CD4-positive, alpha-beta memory T cell (primary cell): ENCODE measurements at regions of chr12 and their contacts with region 1.

Region 1: DNA sequence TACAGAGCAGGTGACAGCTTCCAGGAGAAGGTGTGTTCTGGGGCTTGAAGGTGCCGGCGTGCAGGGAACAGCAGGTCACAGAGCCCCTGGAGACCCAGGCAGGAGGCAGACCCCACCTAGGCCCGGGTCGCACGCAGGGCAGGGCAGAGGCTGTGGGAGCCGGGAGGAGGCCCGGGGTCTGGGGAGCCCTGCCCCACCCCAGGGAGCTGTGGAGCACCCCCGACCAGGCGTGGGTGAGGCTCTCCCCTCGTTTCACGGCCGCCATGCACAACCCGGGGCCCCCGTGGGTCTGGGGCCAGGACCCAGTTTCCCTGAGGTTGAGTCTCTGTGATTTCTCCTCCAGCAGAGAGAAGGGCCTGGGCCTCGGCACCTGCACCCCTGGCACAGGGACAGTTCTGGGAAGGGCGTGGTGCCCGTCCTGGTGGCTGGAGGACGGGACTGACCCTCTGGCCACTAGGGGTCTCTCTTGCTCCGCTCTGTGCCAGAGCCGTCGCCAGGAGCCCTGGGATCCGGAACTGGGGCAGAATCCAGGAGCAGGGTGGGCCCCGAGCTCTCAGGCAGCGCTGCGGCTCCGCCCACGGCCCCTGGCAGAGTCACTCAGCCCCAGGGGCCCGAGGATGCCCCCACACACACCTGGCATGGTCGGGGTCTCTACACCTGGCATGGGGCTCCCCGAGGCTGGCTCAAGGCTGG is 75.2 kb upstream of the FBRSL1 start:
- DNase-seq: peak; percentile 62 to 78 (median 72)
- H3K4me3 ChIP-seq: no peak overlapping the region
- H3K4me3 Mint-ChIP-seq: peak overlapping the region in 1 of 8 donors; percentile 39
- H3K27ac ChIP-seq: no peak overlapping the region
- H3K27ac Mint-ChIP-seq: peak overlapping the region in 2 of 7 donors; percentile 12 to 46
- H3K4me1 ChIP-seq: peaks cover 12% of the 10 kb centered on the region
- H3K4me1 Mint-ChIP-seq: peaks cover 0 to 4% (median under 1%) of the 10 kb centered on the region in 4 donors
- H3K27me3 ChIP-seq: no peaks in the 10 kb centered on the region
- H3K27me3 Mint-ChIP-seq: peaks cover 0 to 1% of the 10 kb centered on the region in 2 donors

Region 2: GRCh38 chr12:132336451-132337413 is 78.0 kb before region 1 on chr12:
- CTCF ChIA-PET with region 1: no interaction called
- POLR2A ChIA-PET with region 1: no interaction called
- intact Hi-C with region 1: no loop called
- DNase-seq: no peak
- H3K4me3 ChIP-seq: no peak overlapping the region
- H3K4me3 Mint-ChIP-seq: no peak overlapping the region
- H3K27ac ChIP-seq: no peak overlapping the region
- H3K27ac Mint-ChIP-seq: no peak overlapping the region
- H3K4me1 ChIP-seq: no peaks in the 10 kb centered on the region
- H3K4me1 Mint-ChIP-seq: no peaks in the 10 kb centered on the region
- H3K27me3 ChIP-seq: no peaks in the 10 kb centered on the region
- H3K27me3 Mint-ChIP-seq: peaks cover 10 to 13% of the 10 kb centered on the region in 2 donors

Region 3: DNA sequence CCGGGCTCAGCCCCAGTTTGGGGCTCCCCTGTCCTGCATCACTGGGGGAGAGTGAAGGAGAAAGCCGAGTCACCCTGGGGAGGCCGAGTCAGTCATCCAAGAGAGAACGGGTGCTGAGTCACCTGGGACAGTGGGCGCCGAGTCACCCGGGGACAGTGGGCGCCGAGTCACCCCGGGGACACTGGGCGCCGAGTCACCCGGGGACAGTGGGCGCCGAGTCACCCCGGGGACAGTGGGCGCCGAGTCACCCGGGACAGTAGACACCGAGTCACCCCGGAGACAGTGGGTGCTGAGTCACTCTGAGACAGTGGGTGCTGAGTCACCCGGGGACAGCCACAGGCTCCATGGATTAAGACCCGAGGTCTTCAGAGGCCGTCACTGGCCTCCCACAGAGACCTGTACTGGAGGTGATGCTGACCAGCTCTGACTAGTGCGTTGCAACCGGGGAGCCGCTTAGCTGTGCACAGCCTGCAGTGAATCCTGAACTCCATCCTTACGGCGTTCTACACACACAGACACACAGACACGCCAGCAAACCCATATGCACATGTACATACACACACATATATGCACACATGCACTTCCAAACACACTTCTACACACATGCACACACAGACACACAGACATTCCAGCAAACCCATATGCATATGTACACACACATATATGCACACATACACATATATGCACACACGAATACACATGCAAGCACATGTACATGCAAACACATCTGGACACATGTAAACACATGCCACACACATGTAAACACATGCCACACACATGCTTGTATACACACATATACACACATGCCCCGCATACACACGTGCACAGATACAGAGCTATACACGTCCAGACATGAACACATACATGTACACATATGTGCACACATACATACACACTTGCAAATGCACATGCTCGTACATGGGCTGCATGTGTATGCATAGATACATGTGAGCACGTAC is 20.5 kb before region 1 on chr12:
- CTCF ChIA-PET with region 1: no interaction called
- POLR2A ChIA-PET with region 1: no interaction called
- intact Hi-C with region 1: no loop called
- DNase-seq: no peak
- H3K4me3 ChIP-seq: no peak overlapping the region
- H3K4me3 Mint-ChIP-seq: no peak overlapping the region
- H3K27ac ChIP-seq: no peak overlapping the region
- H3K27ac Mint-ChIP-seq: no peak overlapping the region
- H3K4me1 ChIP-seq: no peaks in the 10 kb centered on the region
- H3K4me1 Mint-ChIP-seq: no peaks in the 10 kb centered on the region
- H3K27me3 ChIP-seq: no peaks in the 10 kb centered on the region
- H3K27me3 Mint-ChIP-seq: peaks cover 3 to 10% of the 10 kb centered on the region in 2 donors

Region 4: GRCh38 chr12:132429946-132430643 is 15.3 kb after region 1 on chr12:
- CTCF ChIA-PET with region 1: interaction called, 29 read pairs
- POLR2A ChIA-PET with region 1: interaction called, 4 read pairs
- intact Hi-C with region 1: loop called (anchors 1 kb)
- DNase-seq: peak; percentile 61 to 76 (median 72)
- H3K4me3 ChIP-seq: peak overlapping the region in 1 of 2 donors; percentile 23
- H3K4me3 Mint-ChIP-seq: peak overlapping the region; percentile 36 to 86 (median 71)
- H3K27ac ChIP-seq: no peak overlapping the region
- H3K27ac Mint-ChIP-seq: peak overlapping the region in 6 of 7 donors; percentile 32 to 75 (median 66)
- H3K4me1 ChIP-seq: peaks cover 36% of the 10 kb centered on the region
- H3K4me1 Mint-ChIP-seq: peaks cover 17 to 45% (median 24%) of the 10 kb centered on the region in 4 donors
- H3K27me3 ChIP-seq: no peaks in the 10 kb centered on the region
- H3K27me3 Mint-ChIP-seq: no peaks in the 10 kb centered on the region

Region 5: GRCh38 chr12:132513070-132513398 is 98.3 kb after region 1 on chr12:
- CTCF ChIA-PET with region 1: interaction called, 11 read pairs
- POLR2A ChIA-PET with region 1: no interaction called
- intact Hi-C with region 1: no loop called
- DNase-seq: no peak
- H3K4me3 ChIP-seq: no peak overlapping the region
- H3K4me3 Mint-ChIP-seq: no peak overlapping the region
- H3K27ac ChIP-seq: no peak overlapping the region
- H3K27ac Mint-ChIP-seq: peak overlapping the region in 2 of 7 donors; percentile 12 to 46
- H3K4me1 ChIP-seq: no peaks in the 10 kb centered on the region
- H3K4me1 Mint-ChIP-seq: peaks cover 1 to 9% (median 4%) of the 10 kb centered on the region in 4 donors
- H3K27me3 ChIP-seq: no peaks in the 10 kb centered on the region
- H3K27me3 Mint-ChIP-seq: no peaks in the 10 kb centered on the region

Region 6: DNA sequence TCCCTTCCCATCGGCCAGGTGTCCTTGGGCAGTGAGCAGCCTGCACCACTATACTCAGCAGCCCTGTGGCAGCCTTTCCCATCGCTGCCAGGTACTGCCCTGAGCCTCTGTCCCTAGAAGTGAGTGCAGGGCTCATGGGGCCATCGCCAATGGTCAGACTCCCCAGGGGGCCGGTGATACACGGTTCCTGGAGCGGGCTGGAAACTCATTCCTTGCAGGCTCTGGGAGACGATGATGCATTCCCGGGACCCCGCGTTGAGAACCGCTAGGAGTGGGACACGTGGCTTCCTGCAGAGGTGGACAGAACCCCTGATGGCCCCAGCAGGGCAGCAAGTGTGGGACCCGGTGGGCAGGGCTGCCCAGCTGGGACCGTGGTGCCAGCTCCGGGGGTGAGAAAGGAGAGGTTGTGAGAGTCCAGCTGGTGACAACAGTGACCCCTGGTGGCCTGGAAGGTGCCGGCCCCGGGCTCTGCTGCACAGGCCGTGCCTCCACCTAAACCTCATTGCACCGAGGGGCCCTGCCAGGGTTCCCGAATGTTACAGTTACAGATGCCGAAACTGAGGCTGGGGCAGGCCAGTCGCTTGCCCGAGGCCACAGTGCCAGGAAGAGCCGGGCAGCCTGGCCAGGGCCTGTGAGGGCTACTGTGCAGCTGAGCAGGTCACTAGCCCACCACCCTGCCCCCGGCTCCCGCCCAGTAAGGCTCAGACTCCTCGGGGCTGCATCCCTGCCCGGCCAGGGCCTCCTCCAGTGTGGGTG is 109.0 kb after region 1 on chr12:
- CTCF ChIA-PET with region 1: interaction called, 87 read pairs
- POLR2A ChIA-PET with region 1: interaction called, 9 read pairs
- intact Hi-C with region 1: no loop called
- DNase-seq: peak; percentile 59 to 69 (median 63)
- H3K4me3 ChIP-seq: no peak overlapping the region
- H3K4me3 Mint-ChIP-seq: no peak overlapping the region
- H3K27ac ChIP-seq: no peak overlapping the region
- H3K27ac Mint-ChIP-seq: peak overlapping the region in 2 of 7 donors; percentile 55 to 68
- H3K4me1 ChIP-seq: peaks cover 8% of the 10 kb centered on the region
- H3K4me1 Mint-ChIP-seq: peaks cover 9 to 21% (median 12%) of the 10 kb centered on the region in 4 donors
- H3K27me3 ChIP-seq: no peaks in the 10 kb centered on the region
- H3K27me3 Mint-ChIP-seq: no peaks in the 10 kb centered on the region

Region 7: GRCh38 chr12:132614861-132615578 is 200.2 kb after region 1 on chr12:
- CTCF ChIA-PET with region 1: interaction called, 37 read pairs
- POLR2A ChIA-PET with region 1: no interaction called
- intact Hi-C with region 1: loop called (anchors 1 kb)
- DNase-seq: peak; percentile 71 to 76 (median 75)
- H3K4me3 ChIP-seq: no peak overlapping the region
- H3K4me3 Mint-ChIP-seq: peak overlapping the region in 1 of 8 donors; percentile 35
- H3K27ac ChIP-seq: no peak overlapping the region
- H3K27ac Mint-ChIP-seq: peak overlapping the region in 1 of 7 donors; percentile 4
- H3K4me1 ChIP-seq: no peaks in the 10 kb centered on the region
- H3K4me1 Mint-ChIP-seq: peaks cover 7 to 24% (median 13%) of the 10 kb centered on the region in 4 donors
- H3K27me3 ChIP-seq: peaks cover 23% of the 10 kb centered on the region
- H3K27me3 Mint-ChIP-seq: peaks cover 27% of the 10 kb centered on the region in 2 donors